Vagina (tissue), 2 donors: ENCODE measurements at regions of chr11 and their contacts with region 1.

Region 1: DNA sequence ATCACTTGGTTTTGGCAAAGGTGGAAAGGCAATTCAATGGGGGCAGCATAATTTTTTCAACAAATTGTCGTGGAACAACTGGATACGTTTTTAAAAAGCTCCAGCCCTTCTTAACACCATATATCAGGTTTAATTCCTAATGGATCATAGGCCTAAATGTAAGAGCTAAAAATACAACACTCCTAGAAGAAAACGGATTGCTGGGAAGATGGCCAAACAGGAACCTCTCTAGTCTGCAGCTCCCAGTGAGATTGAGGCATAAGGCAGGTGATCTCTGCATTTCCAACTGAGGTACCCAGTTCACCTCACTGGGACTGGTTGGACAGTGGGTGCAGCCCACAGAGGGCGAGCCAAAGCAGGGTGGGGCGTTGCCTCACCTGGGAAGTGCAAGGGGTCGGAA is 32.4 kb upstream of the SCGB1D1 start:
- DNase-seq: no peak
- H3K4me3 ChIP-seq: no peak overlapping the region
- H3K27ac ChIP-seq: no peak overlapping the region
- H3K4me1 ChIP-seq: no peaks in the 10 kb centered on the region
- H3K27me3 ChIP-seq: no peaks in the 10 kb centered on the region
- CTCF ChIP-seq: no peak
- POLR2A ChIP-seq: no peak

Region 2: DNA sequence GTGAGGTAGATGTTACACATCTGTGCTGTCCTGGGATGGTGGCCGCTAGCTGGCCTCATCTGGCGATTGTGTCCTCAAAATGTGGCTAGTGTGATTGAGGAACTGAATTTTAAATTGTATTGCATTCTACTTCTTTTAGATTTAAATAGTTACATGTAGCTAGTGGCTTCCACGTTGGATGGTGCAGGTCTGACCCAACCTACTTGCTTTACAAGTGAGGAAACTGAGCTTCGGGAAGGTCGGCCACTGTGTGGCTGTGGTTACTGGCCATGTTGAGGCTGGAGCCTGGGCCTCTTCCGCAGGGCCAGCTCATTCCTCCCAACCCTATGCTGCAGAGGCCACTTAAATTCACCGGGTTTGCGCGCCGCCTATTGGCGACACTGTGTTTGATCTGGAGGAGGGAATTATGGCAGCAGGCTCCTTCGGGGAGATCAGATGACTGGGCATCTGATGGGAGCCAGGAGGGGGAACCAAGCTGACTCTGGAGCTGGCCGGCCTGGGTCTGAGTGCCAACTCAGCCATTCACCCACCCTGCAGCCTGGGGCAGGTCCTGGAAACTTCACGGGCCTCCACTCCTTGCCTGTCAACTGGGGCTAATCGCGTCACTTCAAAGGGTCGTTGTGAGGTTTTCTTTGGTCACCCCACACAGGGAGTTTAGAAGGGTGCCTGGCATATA is 26.8 kb before region 1 on chr11:
- intact Hi-C with region 1: loop called (anchors 1 kb)
- DNase-seq: peak in 1 of 2 donors; percentile 58
- H3K4me3 ChIP-seq: no peak overlapping the region
- H3K27ac ChIP-seq: no peak overlapping the region
- H3K4me1 ChIP-seq: no peaks in the 10 kb centered on the region
- H3K27me3 ChIP-seq: no peaks in the 10 kb centered on the region
- CTCF ChIP-seq: no peak
- POLR2A ChIP-seq: no peak